Psoas muscle (tissue), 8 donors: ENCODE measurements at regions of chr15 and their contacts with region 1.

Region 1: DNA sequence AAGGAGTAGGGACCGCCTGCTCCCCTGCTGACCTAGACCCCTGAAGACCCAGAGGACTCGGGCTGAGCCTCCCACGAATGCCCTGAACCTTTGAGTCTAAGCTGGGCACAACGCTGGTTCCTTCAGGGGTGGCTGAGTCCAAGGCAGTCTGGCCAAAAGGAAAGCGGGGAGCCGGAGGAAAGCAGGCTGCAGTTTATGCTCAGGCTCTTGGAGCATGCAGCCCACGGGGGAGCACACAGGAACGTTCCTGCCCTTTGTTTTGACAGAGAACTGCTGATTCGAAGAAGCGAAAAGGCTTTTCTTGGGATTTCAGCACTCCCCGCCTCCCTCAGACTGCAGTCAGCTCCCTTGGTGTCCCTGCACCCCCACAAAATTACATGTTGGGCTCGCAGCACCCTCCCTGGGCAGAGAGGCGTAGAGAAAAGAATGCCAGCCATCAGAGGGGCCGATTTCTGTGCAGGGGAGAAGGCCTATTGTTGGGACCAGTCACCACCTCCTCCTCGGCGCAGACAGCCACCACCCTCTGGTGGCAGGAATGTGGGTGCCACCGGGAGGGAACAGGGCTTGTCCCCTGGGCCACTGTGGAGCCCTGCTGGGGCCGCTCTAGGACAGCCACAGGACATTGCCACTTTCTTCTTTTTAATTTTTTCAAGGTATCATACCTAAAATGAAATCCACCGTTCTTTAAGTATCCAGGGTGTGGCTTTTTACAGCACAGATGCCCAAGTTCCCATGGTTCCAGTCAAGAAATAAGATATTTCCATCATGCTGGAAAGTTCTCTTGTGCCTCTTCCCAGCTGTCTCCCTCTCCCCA is 72.2 kb downstream of the SMAD6 start:
- DNase-seq: peak; percentile 84 to 91
- ATAC-seq: peak; percentile 96 to 99 (median 97)
- H3K4me3 ChIP-seq: no peak overlapping the region
- H3K27ac ChIP-seq: peak overlapping the region; percentile 30
- H3K4me1 ChIP-seq: peaks cover 16% of the 10 kb centered on the region
- H3K27me3 ChIP-seq: no peaks in the 10 kb centered on the region
- CTCF ChIP-seq: peak; percentile 97

Region 2: DNA sequence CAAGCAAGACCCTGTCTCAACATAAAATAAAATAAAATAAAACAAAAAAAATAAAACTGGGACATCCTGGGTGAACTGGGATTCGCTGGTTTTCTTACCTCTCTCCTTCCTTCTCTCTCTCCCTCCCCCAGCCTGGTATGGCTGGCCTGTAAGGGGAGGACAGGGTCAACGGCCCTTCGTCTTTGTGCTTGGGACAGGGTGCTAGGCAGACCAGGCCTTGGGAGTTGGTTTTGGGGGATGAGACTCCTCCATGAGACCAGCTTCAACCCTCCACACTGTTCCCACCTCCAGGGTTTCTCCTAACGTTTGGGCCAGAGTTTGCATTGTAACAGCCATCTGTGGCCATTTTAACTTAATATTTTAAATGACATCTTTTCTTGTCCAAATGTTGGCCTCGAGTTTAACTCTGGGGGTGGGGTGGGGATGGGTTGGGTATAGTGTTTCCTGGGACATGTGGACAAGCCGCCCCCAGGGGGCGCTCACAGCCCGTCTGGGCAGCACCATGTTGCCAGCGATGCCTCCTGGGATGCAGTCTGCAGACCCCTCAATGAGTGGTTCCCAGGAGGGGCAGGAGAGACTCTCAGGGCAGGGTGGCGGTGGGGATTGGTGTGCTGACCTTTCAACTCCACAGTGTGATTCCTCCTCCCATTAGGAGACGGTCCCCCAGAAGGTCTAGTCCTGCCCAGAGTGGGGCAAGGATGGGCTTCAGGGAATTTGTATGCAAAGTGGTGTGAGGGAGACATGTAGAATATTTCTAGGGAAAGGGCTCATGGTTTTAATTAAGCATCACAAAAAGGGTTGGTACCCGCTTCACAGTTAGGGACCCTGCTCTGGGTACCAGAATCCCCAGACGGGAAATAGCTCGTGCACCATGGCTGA is 170.7 kb before region 1 on chr15:
- intact Hi-C with region 1: loop called in 1 of 2 experiments (anchors 1 kb)
- DNase-seq: peak; percentile 50 to 71
- ATAC-seq: peak in 3 of 4 donors; percentile 58 to 69 (median 69)
- H3K4me3 ChIP-seq: no peak overlapping the region
- H3K27ac ChIP-seq: no peak overlapping the region
- H3K4me1 ChIP-seq: no peaks in the 10 kb centered on the region
- H3K27me3 ChIP-seq: no peaks in the 10 kb centered on the region
- CTCF ChIP-seq: peak; percentile 53

Region 3: DNA sequence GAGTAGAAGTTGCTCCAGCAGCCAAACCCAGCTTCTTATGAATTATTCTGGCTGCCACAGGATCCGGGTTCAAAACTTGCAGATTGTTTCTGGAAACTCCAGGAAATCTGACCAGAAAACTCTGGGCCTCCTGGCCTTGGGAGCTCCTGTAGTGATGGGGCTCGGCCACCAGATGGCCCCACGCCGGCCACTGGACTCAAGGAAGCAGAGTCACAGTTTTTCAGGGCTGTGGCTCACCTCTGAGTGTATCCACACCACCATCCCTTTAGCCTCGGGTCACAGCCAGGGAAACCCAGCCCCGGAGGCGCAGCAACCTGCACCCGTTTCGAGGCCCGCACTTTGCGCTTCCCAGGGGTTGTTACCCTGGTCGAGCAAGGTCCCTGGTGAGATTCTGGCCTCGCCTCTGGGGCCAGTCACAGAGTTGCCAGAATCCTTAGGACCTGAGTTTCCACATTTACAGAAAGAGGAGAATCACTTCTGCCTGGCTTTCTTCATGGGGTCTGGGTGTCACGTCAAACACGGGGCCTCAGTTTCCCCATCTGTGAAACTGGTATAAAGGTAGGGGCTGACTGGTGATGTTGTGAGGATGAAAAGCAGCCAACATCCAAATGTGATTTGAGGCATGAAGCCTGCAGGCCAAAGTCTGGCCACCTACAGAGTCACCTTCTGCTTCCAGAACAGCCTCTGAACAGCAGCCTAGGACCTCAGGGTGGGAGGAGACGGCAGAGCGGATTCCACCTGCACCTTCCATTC is 154.9 kb before region 1 on chr15:
- intact Hi-C with region 1: loop called (anchors 1 to 2 kb)
- DNase-seq: peak; percentile 76 to 85
- ATAC-seq: peak; percentile 82 to 91 (median 88)
- H3K4me3 ChIP-seq: no peak overlapping the region
- H3K27ac ChIP-seq: no peak overlapping the region
- H3K4me1 ChIP-seq: peaks cover 7% of the 10 kb centered on the region
- H3K27me3 ChIP-seq: peaks cover 0 to 20% (median 6%) of the 10 kb centered on the region in 3 donors
- CTCF ChIP-seq: peak; percentile 88